ENCODE measurements at regions of chr17 and their contacts with region 1.

Region 1: GRCh38 chr17:43673516-43674323 is 12.0 kb upstream of the MEOX1 start:
- DNase-seq: peak in 9 of 10 donors; percentile 36 to 95 (median 78)

Region 2: DNA sequence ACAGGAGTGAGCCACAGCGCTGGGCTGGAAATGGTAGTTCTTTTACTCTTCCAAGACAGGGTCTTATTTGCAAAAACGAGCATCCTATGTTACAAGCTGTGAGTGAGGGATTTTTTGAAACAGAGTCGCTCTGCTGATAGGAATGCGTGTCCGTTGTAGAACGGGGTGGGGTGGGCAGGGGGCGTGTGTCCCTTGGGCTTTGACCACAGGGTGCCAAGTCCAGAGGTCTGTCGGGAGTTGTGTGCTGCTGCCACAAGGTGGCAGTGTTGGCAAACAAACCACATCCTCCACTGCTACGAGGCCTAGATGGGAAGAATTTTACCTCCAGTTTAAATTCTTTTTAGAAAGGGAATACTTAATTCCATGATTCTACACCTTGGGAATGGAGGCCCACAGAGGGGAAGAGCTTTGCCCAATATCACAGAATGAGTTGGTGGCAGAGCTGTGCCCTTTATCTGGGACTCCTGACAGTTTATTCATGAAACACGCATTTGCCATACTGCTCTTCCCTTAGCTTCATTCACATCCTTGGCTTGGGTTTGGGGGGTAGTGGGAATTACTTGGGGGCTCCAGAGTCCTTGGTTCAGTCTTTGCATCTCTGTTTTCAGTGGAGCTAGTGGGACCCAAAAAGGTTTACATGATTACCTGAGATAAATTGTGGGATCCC is 97.0 kb before region 1 on chr17:
- intact Hi-C with region 1: loop called (anchors 1 kb)
- DNase-seq: peak; percentile 40 to 95 (median 74)

Region 3: GRCh38 chr17:43760254-43760852 is 86.6 kb after region 1 on chr17:
- intact Hi-C with region 1: no loop called
- DNase-seq: peak; percentile 84 to 99 (median 95)

Measured in posterior cingulate gyrus (tissue), 11 donors.